ENCODE measurements at regions of chr18 and their contacts with region 1.

Region 1: GRCh38 chr18:35407871-35408481 is 30.8 kb upstream of the ZNF396 start:
- DNase-seq: peak in 1 of 2 experiments; percentile 17
- H3K4me3 ChIP-seq: no peak overlapping the region
- H3K27ac ChIP-seq: no peak overlapping the region
- H3K4me1 ChIP-seq: peaks cover 53% of the 10 kb centered on the region
- H3K27me3 ChIP-seq: no peaks in the 10 kb centered on the region
- CTCF ChIP-seq: peak; percentile 78

Region 2: GRCh38 chr18:35459005-35459441 is 51.0 kb after region 1 on chr18:
- CTCF ChIA-PET with region 1: no interaction called
- POLR2A ChIA-PET with region 1: interaction called, 3 read pairs
- intact Hi-C with region 1: loop called (anchors 5 kb)
- DNase-seq: peak; percentile 86 to 91
- H3K4me3 ChIP-seq: no peak overlapping the region
- H3K27ac ChIP-seq: peak overlapping the region; percentile 92
- H3K4me1 ChIP-seq: peaks cover 80% of the 10 kb centered on the region
- H3K27me3 ChIP-seq: no peaks in the 10 kb centered on the region
- CTCF ChIP-seq: no peak

Region 3: DNA sequence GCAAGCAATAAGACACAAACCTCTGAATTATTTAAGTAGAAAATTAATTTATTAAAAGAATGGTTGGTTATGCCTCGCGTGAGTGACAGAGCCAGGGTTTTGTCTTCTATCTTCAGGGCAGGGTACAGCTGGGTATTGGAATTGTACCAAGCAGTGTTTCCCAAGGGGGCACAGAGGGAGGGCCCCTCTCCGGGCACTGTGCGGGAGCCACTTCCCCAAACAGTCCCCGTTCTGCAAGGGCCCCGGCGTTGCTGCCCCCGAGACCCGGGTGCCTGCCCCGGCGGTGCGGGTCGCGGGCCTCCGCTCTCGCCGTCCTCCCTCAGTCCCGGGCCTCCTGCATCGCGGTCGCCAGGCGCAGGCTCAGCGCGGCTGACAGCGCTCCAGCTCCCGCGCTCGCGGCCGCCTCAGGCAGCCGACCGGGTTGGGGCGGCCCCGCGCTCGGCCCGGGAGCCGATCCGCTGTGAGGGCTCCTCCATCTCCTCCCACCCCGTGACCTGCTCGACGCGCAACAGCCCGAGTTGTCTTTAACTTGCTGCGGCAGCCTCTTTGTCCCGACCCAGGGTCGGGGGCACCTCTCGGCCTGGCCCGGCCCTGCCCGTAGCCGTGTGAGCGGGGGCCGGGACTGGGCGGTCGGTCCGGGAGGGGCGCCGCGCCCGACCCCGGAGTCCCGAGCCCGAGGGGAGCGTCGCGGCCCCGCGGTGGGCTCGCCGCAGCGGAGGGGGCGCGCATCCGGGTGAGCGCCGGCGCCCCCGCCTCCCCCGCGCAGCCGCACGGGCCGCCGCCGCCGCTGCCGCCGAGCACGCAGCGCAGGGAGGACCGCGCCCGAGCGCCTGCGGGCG is 172.9 kb after region 1 on chr18:
- CTCF ChIA-PET with region 1: no interaction called
- POLR2A ChIA-PET with region 1: no interaction called
- intact Hi-C with region 1: loop called (anchors 2 kb)
- DNase-seq: peak; percentile 35
- H3K4me3 ChIP-seq: peak overlapping the region; percentile 65
- H3K27ac ChIP-seq: no peak overlapping the region
- H3K4me1 ChIP-seq: peaks cover 20% of the 10 kb centered on the region
- H3K27me3 ChIP-seq: no peaks in the 10 kb centered on the region
- CTCF ChIP-seq: no peak

Region 4: GRCh38 chr18:35616664-35617423 is 208.9 kb after region 1 on chr18:
- CTCF ChIA-PET with region 1: no interaction called
- POLR2A ChIA-PET with region 1: no interaction called
- intact Hi-C with region 1: loop called (anchors 5 kb)
- DNase-seq: peak; percentile 48 to 66
- H3K4me3 ChIP-seq: no peak overlapping the region
- H3K27ac ChIP-seq: peak overlapping the region; percentile 48
- H3K4me1 ChIP-seq: 0 out of 2 replicates have a peak, but pooled peaks cover 10% of the 10 kb centered on the region
- H3K27me3 ChIP-seq: no peaks in the 10 kb centered on the region
- CTCF ChIP-seq: no peak

Measured in PC-9 (cell line).